ENCODE measurements at regions of chr3 and their contacts with region 1.

Region 1: GRCh38 chr3:122092460-122093165 is 37.5 kb downstream of the CD86 start:
- DNase-seq: peak; percentile 62
- H3K4me3 Mint-ChIP-seq: peak overlapping the region; percentile 3
- H3K27ac Mint-ChIP-seq: peak overlapping the region; percentile 85
- H3K4me1 Mint-ChIP-seq: peaks cover 57% of the 10 kb centered on the region
- H3K27me3 Mint-ChIP-seq: no peaks in the 10 kb centered on the region

Region 2: GRCh38 chr3:121883507-121883906 is 209.1 kb before region 1 on chr3:
- intact Hi-C with region 1: loop called (anchors 1 kb)
- DNase-seq: no peak
- H3K4me3 Mint-ChIP-seq: no peak overlapping the region
- H3K27ac Mint-ChIP-seq: no peak overlapping the region
- H3K4me1 Mint-ChIP-seq: peaks cover 4% of the 10 kb centered on the region
- H3K27me3 Mint-ChIP-seq: no peaks in the 10 kb centered on the region

Region 3: GRCh38 chr3:122132949-122133540 is 40.4 kb after region 1 on chr3:
- intact Hi-C with region 1: no loop called
- DNase-seq: no peak
- H3K4me3 Mint-ChIP-seq: no peak overlapping the region
- H3K27ac Mint-ChIP-seq: no peak overlapping the region
- H3K4me1 Mint-ChIP-seq: peaks cover 4% of the 10 kb centered on the region
- H3K27me3 Mint-ChIP-seq: peaks cover 6% of the 10 kb centered on the region

Region 4: GRCh38 chr3:122208579-122208978 is 116.0 kb after region 1 on chr3:
- intact Hi-C with region 1: no loop called
- DNase-seq: no peak
- H3K4me3 Mint-ChIP-seq: no peak overlapping the region
- H3K27ac Mint-ChIP-seq: no peak overlapping the region
- H3K4me1 Mint-ChIP-seq: no peaks in the 10 kb centered on the region
- H3K27me3 Mint-ChIP-seq: peaks cover 22% of the 10 kb centered on the region